Heart right ventricle (tissue), 16 donors: ENCODE measurements at regions of chr13 and their contacts with region 1.

Region 1: DNA sequence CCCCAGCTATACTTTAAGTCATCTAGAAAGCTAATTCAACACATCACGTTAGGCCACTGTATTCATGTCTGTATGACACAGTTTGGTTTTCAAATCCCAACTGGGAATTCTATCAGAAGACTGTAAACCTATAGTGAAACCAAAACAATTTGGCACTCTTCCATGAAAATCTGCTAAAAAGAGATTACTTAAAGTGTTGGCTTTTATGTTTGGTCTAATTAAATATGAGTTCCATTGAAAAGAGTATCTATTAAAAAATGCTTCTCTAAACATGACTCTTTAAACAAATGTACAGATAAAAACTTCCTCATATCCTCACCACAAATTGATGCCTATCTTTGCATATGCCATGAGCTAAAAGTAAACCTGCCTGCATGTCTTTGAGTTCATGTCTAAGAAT is 25.4 kb downstream of the PCDH9 start:
- DNase-seq: no peak
- ATAC-seq: no peak
- H3K4me3 ChIP-seq: no peak overlapping the region
- H3K27ac ChIP-seq: no peak overlapping the region
- H3K4me1 ChIP-seq: peaks cover 0 to 7% (median 5%) of the 10 kb centered on the region in 9 donors
- H3K27me3 ChIP-seq: no peaks in the 10 kb centered on the region
- CTCF ChIP-seq: no peak

Region 2: GRCh38 chr13:66940113-66940512 is 264.7 kb before region 1 on chr13:
- intact Hi-C with region 1: loop called in 1 of 10 experiments (anchors 5 kb)
- DNase-seq: no peak
- ATAC-seq: no peak
- H3K4me3 ChIP-seq: no peak overlapping the region
- H3K27ac ChIP-seq: no peak overlapping the region
- H3K4me1 ChIP-seq: no peaks in the 10 kb centered on the region
- H3K27me3 ChIP-seq: no peaks in the 10 kb centered on the region
- CTCF ChIP-seq: no peak

Region 3: DNA sequence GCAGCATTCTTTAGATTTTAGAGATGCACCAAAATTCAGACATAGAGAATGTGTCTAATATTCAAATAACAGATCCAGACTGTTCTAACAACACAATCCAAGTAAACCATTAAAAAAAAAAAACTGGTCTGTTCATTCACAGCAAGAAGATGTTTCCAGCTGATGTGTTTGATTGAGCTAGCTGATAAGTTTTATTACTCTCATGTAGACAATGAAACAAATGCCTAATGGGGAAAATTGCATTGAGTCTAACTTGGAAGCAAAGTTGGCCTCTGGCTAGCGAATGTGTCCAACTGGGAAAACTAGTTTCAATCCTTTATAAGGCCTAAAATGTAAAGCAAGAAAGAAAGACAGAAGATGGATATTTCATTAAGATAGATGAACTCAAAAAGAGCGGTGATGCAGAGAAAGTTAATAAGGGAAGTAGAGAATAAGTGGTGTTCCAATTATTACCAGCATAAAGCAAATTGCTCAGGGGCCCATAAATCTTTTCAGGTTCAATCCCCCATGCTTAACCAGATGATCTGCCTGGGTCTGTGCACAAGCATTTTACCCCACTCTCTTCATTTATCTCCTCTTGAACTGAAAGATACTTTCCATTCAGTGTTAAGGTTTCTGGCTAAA is 28.8 kb before region 1 on chr13:
- intact Hi-C with region 1: no loop called
- DNase-seq: no peak
- ATAC-seq: no peak
- H3K4me3 ChIP-seq: no peak overlapping the region
- H3K27ac ChIP-seq: no peak overlapping the region
- H3K4me1 ChIP-seq: peaks cover 0 to 3% (median 0%) of the 10 kb centered on the region in 9 donors
- H3K27me3 ChIP-seq: no peaks in the 10 kb centered on the region
- CTCF ChIP-seq: no peak

Region 4: GRCh38 chr13:67421475-67421874 is 216.7 kb after region 1 on chr13:
- intact Hi-C with region 1: no loop called
- DNase-seq: no peak
- ATAC-seq: no peak
- H3K4me3 ChIP-seq: no peak overlapping the region
- H3K27ac ChIP-seq: no peak overlapping the region
- H3K4me1 ChIP-seq: no peaks in the 10 kb centered on the region
- H3K27me3 ChIP-seq: no peaks in the 10 kb centered on the region
- CTCF ChIP-seq: no peak